ENCODE measurements at regions of chr9 and their contacts with region 1.

Region 1: GRCh38 chr9:133144137-133144903 is 19.4 kb downstream of the GBGT1 start:
- DNase-seq: peak; percentile 94
- H3K4me3 Mint-ChIP-seq: peak overlapping the region; percentile 61
- H3K27ac Mint-ChIP-seq: peak overlapping the region; percentile 92
- H3K4me1 Mint-ChIP-seq: peaks cover 67% of the 10 kb centered on the region
- H3K27me3 Mint-ChIP-seq: no peaks in the 10 kb centered on the region

Region 2: GRCh38 chr9:132644251-132644650 is 500.1 kb before region 1 on chr9:
- intact Hi-C with region 1: no loop called
- DNase-seq: no peak
- H3K4me3 Mint-ChIP-seq: no peak overlapping the region
- H3K27ac Mint-ChIP-seq: no peak overlapping the region
- H3K4me1 Mint-ChIP-seq: peaks cover 11% of the 10 kb centered on the region
- H3K27me3 Mint-ChIP-seq: no peaks in the 10 kb centered on the region

Region 3: DNA sequence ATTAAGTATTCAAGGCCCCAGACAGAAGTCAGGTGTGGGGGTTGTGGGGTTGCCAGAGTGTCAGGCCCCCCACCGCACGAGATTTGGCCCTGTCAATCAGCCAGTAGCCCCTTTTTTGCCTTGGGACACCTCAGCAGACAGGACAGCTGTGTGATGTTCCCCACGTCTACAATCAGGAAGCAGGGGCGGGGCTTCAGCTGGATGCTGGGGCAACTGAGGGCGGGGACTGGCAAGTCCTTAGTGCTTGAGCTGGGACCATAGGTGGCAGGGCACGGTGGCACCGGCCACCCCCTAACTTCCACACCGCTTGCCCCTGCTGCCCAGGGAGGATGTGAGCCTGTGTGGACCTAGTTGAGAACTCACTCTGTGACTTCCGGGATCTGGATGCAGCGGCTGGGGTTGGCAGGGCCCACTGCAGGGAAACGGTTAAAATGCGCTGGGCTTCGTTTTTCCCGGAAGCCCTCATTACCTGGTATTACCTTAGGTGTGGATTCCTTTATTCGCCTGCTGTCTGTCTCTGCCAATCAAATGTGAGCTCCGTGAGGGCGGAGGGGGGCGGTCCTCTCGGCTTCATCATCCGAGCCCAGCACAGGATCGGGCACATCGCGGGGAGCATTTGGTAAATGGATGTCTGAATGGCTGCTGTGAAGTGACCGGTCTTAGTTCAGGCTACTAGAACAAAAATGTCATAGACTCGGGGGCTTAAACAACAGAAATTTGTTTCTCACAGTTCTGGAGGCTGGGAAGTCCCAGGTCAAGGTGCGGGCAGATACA is 121.0 kb before region 1 on chr9:
- intact Hi-C with region 1: loop called (anchors 1 kb)
- DNase-seq: peak; percentile 46
- H3K4me3 Mint-ChIP-seq: peak overlapping the region; percentile 39
- H3K27ac Mint-ChIP-seq: no peak overlapping the region
- H3K4me1 Mint-ChIP-seq: peaks cover 33% of the 10 kb centered on the region
- H3K27me3 Mint-ChIP-seq: peaks cover 4% of the 10 kb centered on the region

Region 4: GRCh38 chr9:133103183-133103986 is 40.9 kb before region 1 on chr9:
- intact Hi-C with region 1: loop called (anchors 1 kb)
- DNase-seq: peak; percentile 41
- H3K4me3 Mint-ChIP-seq: no peak overlapping the region
- H3K27ac Mint-ChIP-seq: peak overlapping the region; percentile 70
- H3K4me1 Mint-ChIP-seq: no peaks in the 10 kb centered on the region
- H3K27me3 Mint-ChIP-seq: no peaks in the 10 kb centered on the region

Region 5: GRCh38 chr9:133115448-133116345 is 28.6 kb before region 1 on chr9:
- intact Hi-C with region 1: loop called (anchors 1 kb)
- DNase-seq: peak; percentile 65
- H3K4me3 Mint-ChIP-seq: peak overlapping the region; percentile 73
- H3K27ac Mint-ChIP-seq: peak overlapping the region; percentile 95
- H3K4me1 Mint-ChIP-seq: peaks cover 60% of the 10 kb centered on the region
- H3K27me3 Mint-ChIP-seq: no peaks in the 10 kb centered on the region

Region 6: DNA sequence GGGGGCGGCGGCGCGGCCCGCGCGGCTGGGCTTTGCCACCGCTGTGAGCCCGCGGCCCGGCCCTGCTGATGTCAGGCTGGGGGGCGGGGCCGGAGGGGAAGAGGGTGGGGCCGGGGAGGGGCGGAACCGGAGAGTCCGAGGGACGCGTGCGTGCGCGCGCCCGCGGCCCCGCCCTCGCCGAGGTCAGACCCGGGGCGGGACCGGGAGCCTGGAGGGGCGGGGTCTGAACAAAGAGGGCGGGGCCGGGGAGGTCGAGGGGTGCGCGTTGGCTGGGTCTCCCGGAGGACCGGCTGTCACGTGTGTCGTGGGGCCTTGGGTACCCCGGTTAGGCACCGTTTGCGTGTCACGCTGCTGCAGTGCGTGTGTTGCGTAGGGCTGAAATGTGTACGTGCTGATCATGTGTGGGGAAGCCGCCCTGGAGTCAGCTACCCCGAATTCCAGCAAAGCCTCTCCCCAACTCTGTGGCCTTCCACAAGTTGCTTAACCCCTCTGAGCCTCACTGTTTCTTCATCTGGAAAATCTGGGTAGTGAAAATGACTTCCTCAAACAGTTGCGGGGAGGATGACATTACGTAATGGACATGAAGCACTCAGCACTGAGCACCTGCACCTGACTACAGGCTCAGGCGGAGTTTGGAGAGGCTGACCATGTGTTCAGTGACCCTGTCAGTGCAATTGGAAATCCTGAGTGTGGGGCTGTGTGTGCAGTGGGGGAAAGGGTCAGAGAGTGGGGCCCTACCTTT is 23.0 kb before region 1 on chr9 and contains the start of gene RALGDS:
- intact Hi-C with region 1: loop called (anchors 1 kb)
- DNase-seq: peak; percentile 84
- H3K4me3 Mint-ChIP-seq: peak within 1 kb of the TSS; percentile 86
- H3K27ac Mint-ChIP-seq: peak within 1 kb of the TSS; percentile 94
- H3K4me1 Mint-ChIP-seq: peaks cover 61% of the 10 kb centered on the region
- H3K27me3 Mint-ChIP-seq: no peaks in the 10 kb centered on the region
- total RNA-seq, gene RALGDS: 88.7 and 94.4 TPM in 2 replicates

Region 7: GRCh38 chr9:133133681-133134418 is 10.5 kb before region 1 on chr9:
- intact Hi-C with region 1: loop called (anchors 1 kb)
- DNase-seq: peak; percentile 91
- H3K4me3 Mint-ChIP-seq: peak overlapping the region; percentile 81
- H3K27ac Mint-ChIP-seq: peak overlapping the region; percentile 100
- H3K4me1 Mint-ChIP-seq: peaks cover 67% of the 10 kb centered on the region
- H3K27me3 Mint-ChIP-seq: no peaks in the 10 kb centered on the region

Region 8: DNA sequence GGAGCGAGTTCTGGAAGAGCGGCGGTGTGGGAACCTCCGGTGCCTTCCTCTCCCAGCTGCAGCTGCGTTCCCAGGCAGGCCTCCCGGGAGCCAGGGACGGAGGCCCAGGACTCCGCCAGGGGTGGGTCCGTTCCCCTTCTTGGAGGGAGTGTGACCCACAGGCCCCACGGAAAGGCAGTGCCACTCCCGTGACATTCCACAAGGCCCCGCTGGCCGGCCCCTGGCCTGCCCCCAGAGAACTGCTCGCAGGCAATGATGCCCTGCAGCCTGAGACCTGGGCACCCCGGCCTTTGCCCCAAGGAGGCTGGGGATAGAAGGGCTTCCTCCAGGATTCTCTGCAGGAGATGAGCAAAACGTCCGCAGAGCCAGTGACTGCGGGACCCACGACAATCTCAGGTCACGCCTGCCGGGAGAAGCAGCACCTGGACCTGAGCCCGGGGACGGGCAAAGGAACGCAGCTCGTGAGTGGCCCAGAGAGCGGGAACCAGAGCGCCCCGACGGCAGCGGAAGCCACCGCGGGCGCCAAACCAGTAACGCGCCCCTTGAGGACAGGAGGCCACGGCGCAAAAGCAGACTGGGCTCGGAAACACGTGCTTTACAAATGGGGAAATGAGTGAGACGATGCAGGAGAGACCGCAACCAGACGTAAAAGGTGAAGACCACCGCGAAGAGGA is 55.5 kb after region 1 on chr9:
- intact Hi-C with region 1: no loop called
- DNase-seq: peak; percentile 11
- H3K4me3 Mint-ChIP-seq: peak overlapping the region; percentile 43
- H3K27ac Mint-ChIP-seq: no peak overlapping the region
- H3K4me1 Mint-ChIP-seq: no peaks in the 10 kb centered on the region
- H3K27me3 Mint-ChIP-seq: peaks cover 13% of the 10 kb centered on the region

Measured in activated T-helper 1 cell treated with anti-CD3 and anti-CD28 coated beads, Interleukin-12 subunit alpha, Interleukin-12 subunit beta, Interleukin-2, Interleukin-4 antibody, amounts not matched to agents 30 ng/mL and 10 ng/mL and 1 ng/mL, durations not matched to agents 14 hours and 24 hours and 36 hours (primary cell).